ENCODE measurements at regions of chr12 and their contacts with region 1.

Region 1: DNA sequence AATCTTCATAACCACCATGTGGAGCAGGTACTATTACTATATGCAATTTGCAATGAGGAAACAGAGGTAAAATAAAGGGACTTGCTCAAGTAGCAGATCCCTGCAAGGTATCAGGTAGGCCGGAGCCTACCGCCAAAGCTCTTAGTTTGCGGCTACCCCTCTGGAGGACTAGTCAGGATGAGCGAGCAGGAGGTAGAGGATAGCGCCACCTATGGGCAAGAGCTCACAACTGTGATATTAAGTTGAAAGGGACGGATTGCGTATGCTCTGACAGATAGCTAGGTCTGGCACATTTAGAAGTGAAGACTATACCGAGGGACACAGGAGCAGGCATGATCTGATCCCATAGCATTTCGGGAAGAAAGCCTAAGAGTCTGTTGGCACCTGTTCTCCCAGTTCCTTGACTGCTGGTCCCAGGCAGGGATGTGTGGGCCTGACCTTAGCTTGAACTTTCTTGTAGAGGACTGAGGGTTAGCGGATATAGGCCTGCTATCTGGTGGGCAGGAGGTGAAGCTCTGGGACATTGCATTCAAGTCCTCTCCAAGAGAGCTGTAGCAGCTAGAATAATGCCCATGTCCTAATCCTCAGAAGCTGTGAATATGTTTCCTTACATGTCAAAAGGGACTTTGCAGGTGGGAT is 48.0 kb downstream of the SLC17A8 start:
- DNase-seq: peak; percentile 70 to 87
- H3K4me3 ChIP-seq: no peak overlapping the region
- H3K27ac ChIP-seq: no peak overlapping the region
- H3K4me1 ChIP-seq: peaks cover 0 to 2% (median 0%) of the 10 kb centered on the region in 4 experiments; a peak in 2 of 7 replicates
- H3K27me3 ChIP-seq: no peaks in the 10 kb centered on the region
- CTCF ChIP-seq: peak; percentile 71 to 98 (median 90)
- EP300 ChIP-seq: no peak
- POLR2A ChIP-seq: no peak
- RAD21 ChIP-seq: peak; percentile 84 to 90

Region 2: GRCh38 chr12:100348657-100349454 is 56.0 kb before region 1 on chr12:
- CTCF ChIA-PET with region 1: interaction called, 92 read pairs
- POLR2A ChIA-PET with region 1: no interaction called
- DNase-seq: no peak
- H3K4me3 ChIP-seq: no peak overlapping the region
- H3K27ac ChIP-seq: no peak overlapping the region
- H3K4me1 ChIP-seq: no peaks in the 10 kb centered on the region
- H3K27me3 ChIP-seq: no peaks in the 10 kb centered on the region
- CTCF ChIP-seq: peak in 2 of 3 experiments; percentile 36 to 51; a peak in 2 of 4 replicates
- EP300 ChIP-seq: no peak
- POLR2A ChIP-seq: no peak
- RAD21 ChIP-seq: peak; percentile 83 to 89

Region 3: DNA sequence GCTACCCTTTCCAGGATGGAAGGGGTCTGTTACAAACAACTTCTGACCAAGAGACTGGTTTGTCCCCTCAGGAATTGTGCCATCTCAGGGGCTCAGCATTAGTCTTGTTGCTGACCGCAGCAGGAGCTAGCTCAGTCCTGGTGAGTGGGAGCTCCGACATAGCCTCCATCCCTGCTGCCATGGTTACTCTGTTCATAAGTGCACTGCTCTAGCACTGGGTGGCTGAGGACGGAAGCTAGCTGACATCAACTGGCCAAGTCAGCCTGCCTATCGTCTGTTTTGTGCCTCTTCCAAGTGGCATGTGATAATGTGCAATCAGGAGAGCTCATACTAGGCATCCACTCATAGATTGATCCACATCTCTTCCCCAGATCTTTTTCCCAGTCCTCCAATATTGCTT is 40.6 kb before region 1 on chr12:
- CTCF ChIA-PET with region 1: interaction called, 46 read pairs
- POLR2A ChIA-PET with region 1: no interaction called
- DNase-seq: no peak
- H3K4me3 ChIP-seq: no peak overlapping the region
- H3K27ac ChIP-seq: no peak overlapping the region
- H3K4me1 ChIP-seq: no peaks in the 10 kb centered on the region
- H3K27me3 ChIP-seq: no peaks in the 10 kb centered on the region
- CTCF ChIP-seq: no peak
- EP300 ChIP-seq: no peak
- POLR2A ChIP-seq: no peak
- RAD21 ChIP-seq: no peak

Region 4: DNA sequence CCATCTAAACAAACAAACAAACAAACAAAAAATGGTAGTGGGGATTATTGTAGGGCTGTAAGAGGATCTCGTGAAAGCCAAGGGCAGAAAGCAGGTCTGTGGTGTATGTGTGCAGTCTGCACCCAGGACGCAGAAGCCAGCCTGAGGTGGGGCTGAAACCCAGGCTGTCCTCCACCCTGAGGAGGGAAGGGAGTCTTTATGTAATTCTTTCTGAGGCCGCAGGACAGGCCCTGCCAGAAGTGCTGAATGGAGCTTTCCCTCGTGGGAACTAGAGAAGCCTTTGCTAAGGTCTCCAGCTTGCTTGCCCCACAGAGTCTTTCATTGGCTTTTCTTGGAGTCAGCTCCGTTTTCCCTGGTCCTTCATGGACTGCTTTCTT is 20.3 kb before region 1 on chr12:
- CTCF ChIA-PET with region 1: interaction called, 49 read pairs
- POLR2A ChIA-PET with region 1: no interaction called
- DNase-seq: no peak
- H3K4me3 ChIP-seq: no peak overlapping the region
- H3K27ac ChIP-seq: no peak overlapping the region
- H3K4me1 ChIP-seq: no peaks in the 10 kb centered on the region
- H3K27me3 ChIP-seq: no peaks in the 10 kb centered on the region
- CTCF ChIP-seq: no peak
- EP300 ChIP-seq: no peak
- POLR2A ChIP-seq: no peak
- RAD21 ChIP-seq: no peak

Region 5: GRCh38 chr12:100427078-100427477 is 22.2 kb after region 1 on chr12:
- CTCF ChIA-PET with region 1: interaction called, 17 read pairs
- POLR2A ChIA-PET with region 1: no interaction called
- DNase-seq: no peak
- H3K4me3 ChIP-seq: no peak overlapping the region
- H3K27ac ChIP-seq: no peak overlapping the region
- H3K4me1 ChIP-seq: no peaks in the 10 kb centered on the region
- H3K27me3 ChIP-seq: no peaks in the 10 kb centered on the region
- CTCF ChIP-seq: no peak
- EP300 ChIP-seq: no peak
- POLR2A ChIP-seq: no peak
- RAD21 ChIP-seq: no peak

Region 6: DNA sequence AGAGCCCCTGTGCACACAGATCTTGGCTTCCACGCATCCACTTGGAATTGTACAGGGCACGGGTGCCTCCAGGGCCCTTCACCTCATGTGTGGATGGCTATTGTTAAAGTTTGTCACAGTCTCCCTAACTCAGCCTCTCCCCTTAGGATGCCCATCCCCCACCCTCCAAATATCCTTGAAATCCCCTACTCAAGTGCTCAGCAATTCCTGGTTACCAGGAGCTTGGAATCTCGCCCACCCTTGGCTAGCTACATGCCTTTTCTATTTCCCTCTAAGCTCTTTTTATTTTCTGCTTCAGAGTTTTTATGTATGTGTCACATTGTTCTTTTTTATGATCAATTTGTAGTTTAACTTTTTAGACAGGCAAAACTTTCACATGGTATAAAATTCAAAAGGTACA is 55.8 kb after region 1 on chr12:
- CTCF ChIA-PET with region 1: interaction called, 12 read pairs
- POLR2A ChIA-PET with region 1: no interaction called
- DNase-seq: no peak
- H3K4me3 ChIP-seq: no peak overlapping the region
- H3K27ac ChIP-seq: no peak overlapping the region
- H3K4me1 ChIP-seq: peaks cover 0 to 3% (median 1%) of the 10 kb centered on the region in 4 experiments; a peak in 1 of 7 replicates
- H3K27me3 ChIP-seq: no peaks in the 10 kb centered on the region
- CTCF ChIP-seq: no peak
- EP300 ChIP-seq: no peak
- POLR2A ChIP-seq: no peak
- RAD21 ChIP-seq: no peak

Region 7: GRCh38 chr12:100528471-100529127 is 123.7 kb after region 1 on chr12:
- CTCF ChIA-PET with region 1: interaction called, 11 read pairs
- POLR2A ChIA-PET with region 1: no interaction called
- DNase-seq: no peak
- H3K4me3 ChIP-seq: no peak overlapping the region
- H3K27ac ChIP-seq: no peak overlapping the region
- H3K4me1 ChIP-seq: peaks cover 0 to 4% (median 2%) of the 10 kb centered on the region in 4 experiments; a peak in 2 of 7 replicates
- H3K27me3 ChIP-seq: no peaks in the 10 kb centered on the region
- CTCF ChIP-seq: no peak
- EP300 ChIP-seq: no peak
- POLR2A ChIP-seq: no peak
- RAD21 ChIP-seq: no peak

Region 8: DNA sequence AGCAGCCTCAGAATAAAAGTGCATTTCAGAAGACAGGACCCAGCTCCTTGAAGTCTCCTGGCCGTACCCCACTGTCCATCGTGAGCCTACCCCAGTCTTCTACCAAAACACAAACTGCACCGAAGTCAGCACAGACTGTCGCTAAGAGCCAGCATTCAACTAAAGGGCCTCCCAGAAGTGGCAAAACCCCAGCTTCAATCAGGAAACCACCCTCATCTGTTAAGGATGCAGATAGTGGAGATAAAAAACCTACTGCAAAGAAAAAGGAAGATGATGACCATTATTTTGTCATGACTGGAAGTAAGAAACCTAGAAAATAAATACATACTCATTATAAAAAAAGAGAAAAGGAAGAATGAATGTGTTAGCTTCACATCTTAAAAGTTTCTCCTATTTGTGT is 219.7 kb after region 1 on chr12:
- CTCF ChIA-PET with region 1: no interaction called
- POLR2A ChIA-PET with region 1: no interaction called
- DNase-seq: no peak
- H3K4me3 ChIP-seq: no peak overlapping the region
- H3K27ac ChIP-seq: no peak overlapping the region
- H3K4me1 ChIP-seq: no peaks in the 10 kb centered on the region
- H3K27me3 ChIP-seq: no peaks in the 10 kb centered on the region
- CTCF ChIP-seq: no peak
- EP300 ChIP-seq: no peak
- POLR2A ChIP-seq: no peak
- RAD21 ChIP-seq: no peak